Kidney (tissue), 22 donors: ENCODE measurements at regions of chr9 and their contacts with region 1.

Region 1: GRCh38 chr9:98315551-98316060 is 60.2 kb upstream of the TBC1D2 start:
- DNase-seq: peak; percentile 82 to 95 (median 91)
- H3K4me3 ChIP-seq: no peak overlapping the region
- H3K27ac ChIP-seq: no peak overlapping the region
- H3K4me1 ChIP-seq: no peaks in the 10 kb centered on the region
- H3K27me3 ChIP-seq: no peaks in the 10 kb centered on the region
- CTCF ChIP-seq: peak; percentile 82

Region 2: DNA sequence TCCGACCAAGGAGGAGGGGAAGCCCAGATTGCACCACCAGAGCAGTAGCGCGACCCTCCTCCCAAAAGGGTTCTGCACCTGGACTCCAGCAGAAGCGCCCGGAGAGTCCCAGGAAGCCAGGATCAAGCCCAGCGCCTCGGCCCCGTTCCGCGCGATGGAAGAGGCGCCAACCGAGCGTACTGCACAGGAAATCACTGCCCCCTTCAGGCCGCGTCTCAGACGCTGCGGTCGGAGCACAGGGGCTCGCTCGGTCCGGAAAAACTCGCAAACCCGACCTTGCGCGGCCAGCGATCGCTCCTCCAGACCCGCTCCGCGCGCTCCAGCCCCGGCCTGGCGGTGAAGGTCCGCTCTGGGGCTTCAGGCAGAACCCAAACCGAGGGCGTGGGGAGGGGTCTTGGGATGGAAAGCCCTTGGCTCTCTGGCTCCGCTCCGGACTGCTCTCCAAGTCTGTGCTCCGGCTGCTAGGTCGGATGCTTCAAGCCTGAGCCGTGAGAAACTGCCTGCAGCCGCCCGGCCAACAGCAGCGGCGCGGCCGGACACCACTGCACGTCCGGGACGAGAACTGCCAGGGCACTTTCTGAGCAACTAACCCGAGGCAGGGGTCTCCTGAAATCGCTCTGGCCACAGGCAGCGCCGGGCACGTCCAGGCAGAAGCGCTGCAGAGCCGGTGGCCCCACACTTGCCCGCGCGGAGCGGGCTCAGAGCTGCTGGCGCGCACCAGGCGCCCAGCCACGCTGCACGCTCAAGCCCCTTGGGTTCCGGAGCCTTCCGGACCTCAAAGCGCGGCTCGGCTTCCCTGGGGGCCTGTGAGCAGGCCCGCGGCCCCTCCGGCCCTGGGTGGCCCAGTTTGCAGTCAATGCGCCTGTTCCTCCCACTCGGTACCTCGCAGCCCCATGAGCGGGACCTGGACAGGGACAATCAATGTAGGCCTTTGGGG is 391.8 kb after region 1 on chr9:
- intact Hi-C with region 1: no loop called
- DNase-seq: peak in 4 of 5 donors; percentile 86 to 92 (median 90)
- H3K4me3 ChIP-seq: no peak overlapping the region
- H3K27ac ChIP-seq: no peak overlapping the region
- H3K4me1 ChIP-seq: peaks cover 0 to 8% (median 0%) of the 10 kb centered on the region in 3 donors
- H3K27me3 ChIP-seq: peaks cover 17% of the 10 kb centered on the region
- CTCF ChIP-seq: peak; percentile 19

Region 3: GRCh38 chr9:98775831-98776441 is 460.3 kb after region 1 on chr9:
- intact Hi-C with region 1: loop called (anchors 5 kb)
- DNase-seq: peak in 4 of 5 donors; percentile 71 to 89 (median 76)
- H3K4me3 ChIP-seq: no peak overlapping the region
- H3K27ac ChIP-seq: no peak overlapping the region
- H3K4me1 ChIP-seq: peaks cover 0 to 4% (median 0%) of the 10 kb centered on the region in 3 donors
- H3K27me3 ChIP-seq: no peaks in the 10 kb centered on the region
- CTCF ChIP-seq: peak; percentile 56